Right ventricle myocardium inferior (tissue), 1 donor: ENCODE measurements at regions of chr5 and their contacts with region 1.

Region 1: GRCh38 chr5:178130604-178131485 is at the start of gene RMND5B:
- DNase-seq: peak; percentile 93
- ATAC-seq: peak; percentile 96
- total RNA-seq, gene RMND5B: 35.2 TPM

Region 2: GRCh38 chr5:178113199-178113787 is 17.6 kb before region 1 on chr5 and contains the start of gene N4BP3:
- intact Hi-C with region 1: loop called (anchors 2 kb)
- DNase-seq: no peak
- ATAC-seq: peak; percentile 33
- total RNA-seq, gene N4BP3: 2.9 TPM